ENCODE measurements at regions of chr20 and their contacts with region 1.

Region 1: DNA sequence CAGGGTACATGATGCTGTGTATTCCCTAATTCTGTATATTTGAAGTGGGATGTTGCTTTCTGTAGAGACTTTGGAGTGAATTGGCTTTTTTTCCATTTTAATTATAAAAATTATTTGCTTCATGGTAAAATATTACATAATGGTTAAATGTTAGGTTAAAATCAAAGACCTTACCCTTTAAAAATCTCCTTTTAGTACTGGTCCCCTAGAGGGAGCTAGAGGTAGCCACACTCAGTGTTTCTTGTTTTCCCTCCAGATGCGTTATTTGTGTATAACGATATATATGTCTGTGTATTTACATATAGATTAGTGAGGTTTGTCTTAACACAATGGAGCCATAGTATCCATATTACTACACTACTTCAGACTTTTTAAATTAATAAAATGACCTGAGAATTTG is 146.7 kb downstream of the PLCB4 start:
- DNase-seq: no peak

Region 2: GRCh38 chr20:8932192-8933165 is 283.1 kb before region 1 on chr20:
- intact Hi-C with region 1: loop called in 1 of 2 experiments (anchors 10 kb)
- DNase-seq: no peak

Measured in posterior vena cava (tissue), 2 donors.